ENCODE measurements at regions of chr14 and their contacts with region 1.

Region 1: GRCh38 chr14:77158175-77158891 is 16.7 kb upstream of the ZDHHC22 start:
- DNase-seq: peak in 4 of 5 donors; percentile 35 to 74 (median 70)
- ATAC-seq: peak; percentile 73 to 96 (median 90)
- H3K4me3 ChIP-seq: no peak overlapping the region
- H3K27ac ChIP-seq: peak overlapping the region in 4 of 12 donors; percentile 14 to 45 (median 33)
- H3K4me1 ChIP-seq: peaks cover 0 to 25% (median 0%) of the 10 kb centered on the region in 12 donors
- H3K27me3 ChIP-seq: peaks cover 0 to 13% (median 8%) of the 10 kb centered on the region in 9 donors
- CTCF ChIP-seq: no peak
- POLR2A ChIP-seq: no peak

Region 2: GRCh38 chr14:77314043-77314442 is 155.7 kb after region 1 on chr14:
- intact Hi-C with region 1: loop called (anchors 2 to 10 kb)
- DNase-seq: no peak
- ATAC-seq: no peak
- H3K4me3 ChIP-seq: no peak overlapping the region
- H3K27ac ChIP-seq: peak overlapping the region in 1 of 12 donors; percentile 60
- H3K4me1 ChIP-seq: peaks cover 0 to 42% (median 15%) of the 10 kb centered on the region in 12 donors
- H3K27me3 ChIP-seq: no peaks in the 10 kb centered on the region
- CTCF ChIP-seq: no peak
- POLR2A ChIP-seq: no peak

Measured in heart left ventricle (tissue), 16 donors.